Calu3 (cell line): ENCODE measurements at regions of chr9 and their contacts with region 1.

Region 1: DNA sequence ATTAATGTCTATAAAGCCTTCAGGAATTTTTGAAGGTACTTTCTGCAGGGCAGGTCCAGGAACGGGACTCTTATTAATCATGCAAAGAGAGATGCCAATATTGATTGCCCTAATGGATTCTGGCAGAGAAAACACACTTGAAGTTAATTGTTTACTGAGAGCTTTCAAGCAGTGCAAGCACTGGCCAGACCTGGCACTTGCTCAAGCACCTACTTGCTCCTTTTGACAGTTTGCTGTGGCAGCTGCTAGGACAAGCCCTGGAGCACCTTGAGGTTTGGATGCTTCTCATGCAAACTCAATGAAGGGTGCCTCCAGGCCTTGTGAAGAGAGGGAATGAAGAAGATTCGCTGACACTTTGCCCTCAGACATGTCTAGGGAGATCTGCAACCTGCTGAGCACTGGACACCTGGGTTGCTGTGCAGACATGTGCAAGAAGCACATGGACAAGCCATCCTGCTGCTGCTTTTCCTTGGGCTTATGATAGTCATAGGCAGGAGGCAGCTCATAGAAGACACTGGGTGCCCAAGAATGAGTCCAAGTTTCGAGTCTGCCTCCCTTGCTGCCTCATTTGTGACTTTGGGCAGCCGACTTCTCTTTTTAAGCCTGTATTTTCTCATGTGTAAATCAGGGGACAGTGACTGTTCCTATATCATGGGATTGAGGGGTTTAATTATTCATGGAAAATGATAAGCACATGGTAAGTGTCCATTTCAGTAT is 88.8 kb upstream of the EQTN start:
- DNase-seq: peak; percentile 36
- H3K4me3 Mint-ChIP-seq: peak overlapping the region; percentile 41
- H3K27ac Mint-ChIP-seq: no peak overlapping the region
- H3K4me1 Mint-ChIP-seq: peaks cover 82% of the 10 kb centered on the region
- H3K27me3 Mint-ChIP-seq: no peaks in the 10 kb centered on the region
- CTCF ChIP-seq: no peak

Region 2: GRCh38 chr9:27427273-27427645 is 41.5 kb after region 1 on chr9:
- CTCF ChIA-PET with region 1: no interaction called
- intact Hi-C with region 1: loop called (anchors 5 kb)
- DNase-seq: peak; percentile 44
- H3K4me3 Mint-ChIP-seq: no peak overlapping the region
- H3K27ac Mint-ChIP-seq: peak overlapping the region; percentile 89
- H3K4me1 Mint-ChIP-seq: peaks cover 59% of the 10 kb centered on the region
- H3K27me3 Mint-ChIP-seq: no peaks in the 10 kb centered on the region
- CTCF ChIP-seq: no peak

Region 3: GRCh38 chr9:27529316-27530278 is 143.8 kb after region 1 on chr9 and contains the start of gene MOB3B:
- CTCF ChIA-PET with region 1: no interaction called
- intact Hi-C with region 1: loop called (anchors 2 kb)
- DNase-seq: peak; percentile 83
- H3K4me3 Mint-ChIP-seq: peak within 1 kb of the TSS; percentile 81
- H3K27ac Mint-ChIP-seq: peak within 1 kb of the TSS; percentile 14
- H3K4me1 Mint-ChIP-seq: peaks cover 3% of the 10 kb centered on the region
- H3K27me3 Mint-ChIP-seq: no peaks in the 10 kb centered on the region
- CTCF ChIP-seq: peak; percentile 67
- total RNA-seq, gene MOB3B: 7.6 and 10.8 TPM in 2 replicates